ENCODE measurements at regions of chr4 and their contacts with region 1.

Region 1: DNA sequence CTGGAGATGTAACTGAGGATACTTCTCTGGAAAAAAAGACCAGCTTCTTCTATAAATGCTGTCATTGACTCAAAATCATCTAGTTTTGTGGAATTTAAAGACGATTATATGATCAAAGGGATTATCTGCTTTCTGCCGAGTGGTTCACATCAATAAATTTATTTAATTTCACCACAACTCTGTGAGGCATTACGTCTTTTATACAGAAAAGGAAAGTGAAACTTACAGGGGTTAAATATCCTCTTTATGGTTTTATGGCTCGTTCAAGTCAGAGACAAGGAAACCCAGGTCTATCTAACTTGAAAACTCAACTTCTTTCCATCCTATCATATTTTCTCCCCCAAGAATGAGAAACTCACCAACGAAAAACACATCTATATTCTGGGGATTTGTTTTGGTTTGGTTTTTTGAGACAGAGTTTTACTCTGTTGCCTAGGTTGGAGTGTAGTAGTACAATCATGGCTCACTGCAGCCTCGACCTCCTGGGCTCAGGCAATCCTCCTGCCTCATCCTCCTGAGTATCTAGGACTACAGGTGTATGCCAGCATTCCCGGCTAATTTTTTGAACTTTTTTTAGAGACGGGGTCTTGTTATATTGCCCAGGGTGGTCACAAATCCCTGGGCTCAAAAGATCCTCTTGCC is 377.9 kb upstream of the EMCN start:
- DNase-seq: no peak
- H3K4me3 ChIP-seq: peak overlapping the region; percentile 22 to 50 (median 35)
- H3K27ac ChIP-seq: no peak overlapping the region
- H3K4me1 ChIP-seq: no peaks in the 10 kb centered on the region
- H3K27me3 ChIP-seq: no peaks in the 10 kb centered on the region
- CTCF ChIP-seq: no peak
- POLR2A ChIP-seq: no peak

Region 2: DNA sequence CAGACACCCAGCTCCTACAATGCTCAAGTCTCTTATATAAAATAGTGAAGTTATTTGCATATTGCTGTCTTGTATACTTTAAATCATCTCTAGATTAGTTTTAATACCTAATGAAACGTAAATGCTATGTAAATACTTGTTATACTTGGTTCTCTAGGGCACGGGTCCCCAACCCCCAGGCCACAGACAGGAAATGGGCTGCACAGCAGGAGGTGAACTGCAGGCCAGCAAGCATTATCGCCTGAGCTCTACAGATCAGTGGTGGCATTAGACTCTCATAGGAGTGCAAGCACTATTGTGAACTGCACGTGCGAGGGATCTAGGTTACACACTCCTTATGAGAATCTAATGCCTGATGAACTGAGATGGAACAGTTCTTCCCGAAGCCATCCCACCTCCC is 18.0 kb after region 1 on chr4:
- intact Hi-C with region 1: no loop called
- DNase-seq: no peak
- H3K4me3 ChIP-seq: no peak overlapping the region
- H3K27ac ChIP-seq: no peak overlapping the region
- H3K4me1 ChIP-seq: no peaks in the 10 kb centered on the region
- H3K27me3 ChIP-seq: no peaks in the 10 kb centered on the region
- CTCF ChIP-seq: no peak
- POLR2A ChIP-seq: no peak

Region 3: GRCh38 chr4:101081695-101082369 is 186.2 kb after region 1 on chr4:
- intact Hi-C with region 1: loop called (anchors 5 kb)
- DNase-seq: no peak
- H3K4me3 ChIP-seq: no peak overlapping the region
- H3K27ac ChIP-seq: no peak overlapping the region
- H3K4me1 ChIP-seq: no peaks in the 10 kb centered on the region
- H3K27me3 ChIP-seq: no peaks in the 10 kb centered on the region
- CTCF ChIP-seq: no peak
- POLR2A ChIP-seq: no peak

Region 4: GRCh38 chr4:101279377-101279871 is 383.7 kb after region 1 on chr4:
- intact Hi-C with region 1: no loop called
- DNase-seq: no peak
- H3K4me3 ChIP-seq: no peak overlapping the region
- H3K27ac ChIP-seq: no peak overlapping the region
- H3K4me1 ChIP-seq: no peaks in the 10 kb centered on the region
- H3K27me3 ChIP-seq: no peaks in the 10 kb centered on the region
- CTCF ChIP-seq: no peak
- POLR2A ChIP-seq: no peak